Sigmoid colon (tissue), 7 donors: ENCODE measurements at regions of chr13 and their contacts with region 1.

Region 1: GRCh38 chr13:110644892-110645521 is 29.7 kb downstream of the NAXD start:
- DNase-seq: peak; percentile 90
- H3K4me3 ChIP-seq: no peak overlapping the region
- H3K27ac ChIP-seq: peak overlapping the region in 3 of 4 donors; percentile 61 to 72 (median 66)
- H3K4me1 ChIP-seq: peaks cover 0 to 32% (median 28%) of the 10 kb centered on the region in 4 donors
- H3K27me3 ChIP-seq: no peaks in the 10 kb centered on the region
- CTCF ChIP-seq: peak in 3 of 4 experiments; percentile 22 to 48 (median 36)
- EP300 ChIP-seq: no peak
- POLR2A ChIP-seq: no peak

Region 2: DNA sequence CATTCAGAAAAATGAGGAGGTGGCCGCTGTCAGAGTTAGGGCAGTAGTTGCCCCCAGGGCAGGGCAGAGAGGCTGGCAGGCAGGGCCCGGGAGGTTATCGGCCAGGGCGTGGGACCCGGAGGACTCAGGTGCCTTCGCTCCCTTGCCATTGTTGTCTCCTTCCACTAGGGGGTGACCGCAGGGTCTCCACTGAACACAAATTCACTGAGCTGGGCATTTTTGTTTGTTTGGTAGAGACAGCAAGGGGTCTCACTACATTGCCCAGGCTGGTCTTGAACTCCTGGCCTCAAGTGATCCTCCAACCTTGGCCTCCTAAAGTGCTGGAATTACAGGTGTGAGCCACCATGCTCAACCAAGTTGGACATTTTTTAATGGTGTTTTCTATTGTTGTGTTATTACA is 35.8 kb after region 1 on chr13:
- intact Hi-C with region 1: loop called (anchors 5 kb)
- DNase-seq: no peak
- H3K4me3 ChIP-seq: no peak overlapping the region
- H3K27ac ChIP-seq: peak overlapping the region in 2 of 4 donors; percentile 23 to 94
- H3K4me1 ChIP-seq: peaks cover 0 to 21% (median 19%) of the 10 kb centered on the region in 4 donors
- H3K27me3 ChIP-seq: no peaks in the 10 kb centered on the region
- CTCF ChIP-seq: peak in 3 of 4 experiments; percentile 11 to 39 (median 22)
- EP300 ChIP-seq: no peak
- POLR2A ChIP-seq: no peak

Region 3: GRCh38 chr13:110907951-110908898 is 263.2 kb after region 1 on chr13:
- intact Hi-C with region 1: no loop called
- DNase-seq: no peak
- H3K4me3 ChIP-seq: no peak overlapping the region
- H3K27ac ChIP-seq: peak overlapping the region; percentile 13 to 68 (median 36)
- H3K4me1 ChIP-seq: peaks cover 0 to 83% (median 70%) of the 10 kb centered on the region in 4 donors
- H3K27me3 ChIP-seq: no peaks in the 10 kb centered on the region
- CTCF ChIP-seq: no peak
- EP300 ChIP-seq: no peak
- POLR2A ChIP-seq: no peak